Endothelial cell of umbilical vein (primary cell): ENCODE measurements at regions of chr4 and their contacts with region 1.

Region 1: DNA sequence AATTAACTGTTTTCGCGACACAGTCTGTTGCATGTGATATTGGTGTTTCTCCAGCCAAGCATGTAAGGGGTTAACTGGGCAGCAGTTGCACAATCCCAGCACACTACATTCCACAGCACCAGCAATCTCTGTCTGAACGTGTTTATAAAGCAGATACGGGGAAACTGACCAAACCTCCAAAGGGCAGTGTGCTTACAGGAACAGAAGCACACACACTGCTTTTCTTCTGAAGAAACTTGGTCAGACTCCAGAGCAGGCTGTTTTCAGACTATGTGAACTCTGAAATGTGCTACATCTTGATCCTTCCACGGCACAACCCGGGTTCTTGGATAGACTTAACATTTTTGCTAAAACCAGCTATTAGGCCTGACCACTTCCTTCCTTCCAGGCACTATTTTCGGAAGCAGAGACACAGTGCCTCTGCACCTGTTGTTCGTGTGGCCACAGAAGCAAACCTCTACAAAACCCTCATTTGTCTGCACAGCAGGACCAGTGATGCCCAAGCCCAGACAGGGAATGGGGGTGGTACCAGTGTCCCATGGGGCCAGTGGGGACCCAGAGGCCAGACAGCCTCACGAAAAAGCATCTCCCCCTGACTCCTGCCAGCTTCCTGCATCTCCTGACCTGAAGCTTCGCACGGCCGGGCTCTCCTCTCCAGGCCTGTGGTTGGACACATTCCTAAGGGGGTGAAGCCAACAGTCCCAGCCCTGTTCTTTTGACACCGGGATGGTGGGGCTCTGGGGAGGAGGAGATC is 90.1 kb downstream of the IRF2 start:
- DNase-seq: peak; percentile 74
- H3K4me3 ChIP-seq: peak overlapping the region in 2 of 3 experiments; percentile 37 to 71
- H3K27ac ChIP-seq: peak overlapping the region; percentile 71
- H3K4me1 ChIP-seq: peaks cover 52% of the 10 kb centered on the region
- H3K27me3 ChIP-seq: no peaks in the 10 kb centered on the region
- CTCF ChIP-seq: no peak
- POLR2A ChIP-seq: no peak

Region 2: GRCh38 chr4:184232206-184232820 is 151.9 kb before region 1 on chr4:
- CTCF ChIA-PET with region 1: no interaction called
- POLR2A ChIA-PET with region 1: no interaction called
- dilution Hi-C with region 1: no loop called
- intact Hi-C with region 1: no loop called
- DNase-seq: no peak
- H3K4me3 ChIP-seq: no peak overlapping the region
- H3K27ac ChIP-seq: no peak overlapping the region
- H3K4me1 ChIP-seq: no peaks in the 10 kb centered on the region
- H3K27me3 ChIP-seq: peaks cover 3% of the 10 kb centered on the region in 2 experiments
- CTCF ChIP-seq: no peak
- POLR2A ChIP-seq: no peak

Region 3: DNA sequence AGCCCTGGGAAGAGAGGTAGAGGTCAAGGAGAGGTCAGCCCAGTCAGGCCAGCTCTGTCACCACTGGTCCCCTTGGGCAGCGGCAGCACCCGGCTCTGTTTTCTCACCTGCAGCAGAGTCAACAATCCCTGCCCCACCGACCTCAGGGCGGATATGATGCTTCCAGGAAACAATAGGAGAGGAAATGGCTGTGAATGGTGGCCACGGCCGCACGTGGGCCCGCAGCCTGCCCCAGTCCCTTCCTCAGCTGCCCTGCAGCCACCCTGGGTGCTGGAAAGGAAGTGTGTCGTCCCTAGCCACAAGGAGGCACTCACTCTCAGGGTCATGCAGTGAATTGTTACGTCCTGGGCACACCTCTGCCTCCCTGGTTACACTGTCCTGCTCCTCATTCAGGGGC is 74.1 kb before region 1 on chr4:
- CTCF ChIA-PET with region 1: no interaction called
- POLR2A ChIA-PET with region 1: no interaction called
- dilution Hi-C with region 1: no loop called
- intact Hi-C with region 1: loop called (anchors 1 kb)
- DNase-seq: peak; percentile 28
- H3K4me3 ChIP-seq: no peak overlapping the region
- H3K27ac ChIP-seq: peak overlapping the region; percentile 21
- H3K4me1 ChIP-seq: no peaks in the 10 kb centered on the region
- H3K27me3 ChIP-seq: no peaks in the 10 kb centered on the region
- CTCF ChIP-seq: peak; percentile 20 to 22
- POLR2A ChIP-seq: no peak

Region 4: DNA sequence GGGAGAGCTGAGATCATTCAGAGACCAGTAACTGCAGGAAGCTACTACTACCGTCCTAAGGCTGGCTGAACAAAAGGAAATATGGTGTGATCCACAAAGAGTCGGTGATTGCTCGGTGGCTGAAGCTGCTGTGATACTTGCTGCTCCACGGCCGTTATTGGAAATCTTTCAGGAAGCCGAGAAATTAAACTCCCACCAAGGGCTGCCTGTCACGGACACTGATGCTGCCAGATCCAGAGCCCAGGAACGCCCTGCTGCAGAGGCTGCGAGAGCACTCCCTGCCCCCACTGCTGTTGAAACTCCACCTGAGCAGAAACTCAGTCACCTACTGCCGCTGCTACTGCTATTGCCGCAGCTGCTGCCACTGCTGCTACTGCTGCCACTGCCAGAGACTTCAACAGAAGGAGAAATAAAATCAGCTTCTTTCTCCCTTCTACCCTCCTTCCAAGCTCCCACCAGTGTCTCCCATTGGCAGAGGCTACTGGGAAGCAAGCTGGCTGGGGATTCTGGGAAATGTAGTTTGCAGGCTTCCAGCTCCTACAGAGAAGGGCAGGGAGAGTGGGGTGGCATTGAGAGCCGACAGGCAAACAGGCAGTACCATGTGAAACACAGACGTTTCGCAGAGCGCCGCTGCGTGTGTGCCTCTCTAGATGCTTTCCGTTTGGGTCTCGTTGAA is 40.6 kb before region 1 on chr4:
- CTCF ChIA-PET with region 1: interaction called, 4 read pairs
- POLR2A ChIA-PET with region 1: no interaction called
- dilution Hi-C with region 1: no loop called
- intact Hi-C with region 1: loop called (anchors 1 kb)
- DNase-seq: peak; percentile 87
- H3K4me3 ChIP-seq: peak overlapping the region; percentile 80 to 90 (median 83)
- H3K27ac ChIP-seq: peak overlapping the region; percentile 62
- H3K4me1 ChIP-seq: peaks cover 13% of the 10 kb centered on the region
- H3K27me3 ChIP-seq: no peaks in the 10 kb centered on the region
- CTCF ChIP-seq: no peak
- POLR2A ChIP-seq: peak; percentile 78

Region 5: DNA sequence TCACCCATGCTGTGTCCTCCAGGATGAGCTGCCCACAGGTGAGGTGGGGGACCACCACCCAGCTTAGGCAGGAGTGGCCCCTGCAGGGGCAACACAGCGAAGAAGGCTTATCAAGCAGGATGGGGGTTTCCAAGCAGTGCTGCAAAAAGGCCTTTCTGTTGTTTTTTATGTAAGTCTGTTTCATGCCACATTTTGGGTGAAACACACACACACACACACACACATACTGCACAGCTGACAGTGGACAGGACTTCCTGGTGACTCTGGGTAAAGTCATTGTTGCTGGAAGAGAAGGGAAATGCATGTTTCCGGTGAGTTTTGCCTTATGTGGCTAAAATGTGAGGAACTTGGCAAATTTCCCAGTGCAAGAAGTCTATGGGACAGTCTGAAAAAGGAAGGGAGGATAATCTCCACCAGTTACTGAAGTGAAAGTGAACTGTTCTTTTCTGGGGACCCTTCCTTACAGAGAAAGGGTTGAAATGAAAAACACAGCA is 29.1 kb before region 1 on chr4:
- CTCF ChIA-PET with region 1: interaction called, 3 read pairs
- POLR2A ChIA-PET with region 1: interaction called, 3 read pairs
- dilution Hi-C with region 1: no loop called
- intact Hi-C with region 1: loop called (anchors 1 kb)
- DNase-seq: peak; percentile 98
- H3K4me3 ChIP-seq: no peak overlapping the region
- H3K27ac ChIP-seq: peak overlapping the region; percentile 72
- H3K4me1 ChIP-seq: peaks cover 13% of the 10 kb centered on the region
- H3K27me3 ChIP-seq: no peaks in the 10 kb centered on the region
- CTCF ChIP-seq: no peak
- POLR2A ChIP-seq: peak; percentile 73

Region 6: GRCh38 chr4:184408021-184408710 is 23.9 kb after region 1 on chr4:
- CTCF ChIA-PET with region 1: no interaction called
- POLR2A ChIA-PET with region 1: no interaction called
- dilution Hi-C with region 1: no loop called
- intact Hi-C with region 1: loop called (anchors 2 kb)
- DNase-seq: peak; percentile 21
- H3K4me3 ChIP-seq: no peak overlapping the region
- H3K27ac ChIP-seq: peak overlapping the region; percentile 6
- H3K4me1 ChIP-seq: peaks cover 25% of the 10 kb centered on the region
- H3K27me3 ChIP-seq: no peaks in the 10 kb centered on the region
- CTCF ChIP-seq: no peak
- POLR2A ChIP-seq: no peak

Region 7: DNA sequence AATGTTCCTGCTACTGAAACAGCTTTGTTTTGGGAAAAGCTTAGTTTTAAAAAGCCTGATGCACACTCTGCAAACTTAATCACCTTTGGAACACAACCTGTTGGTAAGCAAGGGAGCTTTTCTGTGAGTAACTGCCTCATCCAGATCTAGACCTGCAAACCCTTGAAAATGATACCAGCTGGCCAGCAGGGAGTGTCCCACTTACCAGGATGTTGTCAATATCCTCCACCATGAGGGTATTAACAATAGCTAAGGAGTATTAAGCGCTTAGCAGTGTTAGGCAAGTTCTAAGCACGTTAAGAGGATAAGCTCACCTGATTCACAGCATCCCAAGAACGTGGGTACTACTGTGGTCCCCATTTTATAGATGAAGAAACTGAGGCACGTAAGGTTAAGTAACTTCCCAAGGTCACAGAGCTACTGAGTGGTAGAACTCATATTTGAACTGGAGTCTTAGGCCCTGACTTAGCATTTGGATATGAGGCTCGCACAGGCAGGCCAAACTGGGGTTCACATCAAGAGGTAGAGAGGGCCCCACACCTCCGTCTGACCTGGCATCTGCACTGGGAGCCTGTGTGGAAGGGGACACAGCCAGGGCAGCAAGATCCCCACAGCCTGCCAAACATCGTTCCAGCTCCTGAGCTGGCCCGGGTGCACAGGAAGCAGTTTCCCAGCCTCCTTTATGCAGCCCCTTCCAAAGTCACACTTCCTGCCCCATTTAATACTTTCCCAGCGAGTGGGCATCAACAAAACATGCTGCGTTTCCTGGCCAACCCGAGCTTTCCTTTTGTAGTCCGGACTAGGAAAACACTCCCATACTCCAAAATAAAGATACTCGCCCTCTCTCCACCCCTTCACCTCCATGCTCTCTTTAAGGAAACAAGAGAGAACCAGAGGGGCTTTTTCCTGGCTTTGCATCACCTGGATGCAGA is 57.5 kb after region 1 on chr4:
- CTCF ChIA-PET with region 1: no interaction called
- POLR2A ChIA-PET with region 1: no interaction called
- dilution Hi-C with region 1: no loop called
- intact Hi-C with region 1: loop called (anchors 2 kb)
- DNase-seq: peak; percentile 74
- H3K4me3 ChIP-seq: peak overlapping the region in 1 of 3 experiments; percentile 19
- H3K27ac ChIP-seq: peak overlapping the region; percentile 44
- H3K4me1 ChIP-seq: peaks cover 15% of the 10 kb centered on the region
- H3K27me3 ChIP-seq: no peaks in the 10 kb centered on the region
- CTCF ChIP-seq: no peak
- POLR2A ChIP-seq: no peak

Region 8: DNA sequence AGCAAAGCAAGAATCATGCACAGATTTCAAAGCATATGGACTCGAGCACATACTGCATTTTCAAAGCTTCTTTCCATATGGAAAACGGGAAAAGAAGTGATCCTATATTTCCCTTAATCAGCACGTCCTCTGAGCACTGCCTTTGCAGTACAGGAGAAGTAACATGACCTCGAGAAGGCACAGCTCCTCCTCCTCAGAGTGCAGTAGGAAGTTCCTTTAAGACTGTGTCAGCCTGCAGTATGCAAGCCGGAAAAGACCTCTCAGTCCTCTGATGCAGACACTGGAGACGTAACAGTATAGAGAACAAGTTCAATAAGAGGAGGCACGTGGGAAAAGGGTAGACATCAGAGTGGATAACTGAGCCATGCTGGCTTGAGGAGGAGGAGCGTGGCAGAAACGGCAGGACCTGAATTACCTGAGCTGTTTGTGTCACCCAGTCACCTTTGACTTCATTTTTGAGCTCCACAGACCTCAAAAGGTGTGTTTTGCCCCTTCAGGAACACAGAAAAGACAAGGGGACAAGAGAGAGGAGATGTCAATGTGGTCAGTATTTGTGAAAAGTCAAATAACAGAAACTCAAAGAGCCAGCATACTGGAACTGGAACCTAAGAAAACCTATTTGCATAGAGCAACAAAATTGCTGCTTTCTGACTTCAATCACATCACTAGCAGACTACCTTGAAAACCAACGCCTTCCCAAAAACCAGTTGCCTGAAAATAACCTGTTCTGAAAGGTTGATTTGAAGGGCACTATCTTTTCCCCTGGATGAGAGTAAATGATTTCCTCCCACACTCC is 69.3 kb after region 1 on chr4:
- CTCF ChIA-PET with region 1: no interaction called
- POLR2A ChIA-PET with region 1: no interaction called
- dilution Hi-C with region 1: no loop called
- intact Hi-C with region 1: no loop called
- DNase-seq: peak; percentile 80
- H3K4me3 ChIP-seq: no peak overlapping the region
- H3K27ac ChIP-seq: peak overlapping the region; percentile 54
- H3K4me1 ChIP-seq: peaks cover 42% of the 10 kb centered on the region
- H3K27me3 ChIP-seq: no peaks in the 10 kb centered on the region
- CTCF ChIP-seq: no peak
- POLR2A ChIP-seq: no peak

Region 9: DNA sequence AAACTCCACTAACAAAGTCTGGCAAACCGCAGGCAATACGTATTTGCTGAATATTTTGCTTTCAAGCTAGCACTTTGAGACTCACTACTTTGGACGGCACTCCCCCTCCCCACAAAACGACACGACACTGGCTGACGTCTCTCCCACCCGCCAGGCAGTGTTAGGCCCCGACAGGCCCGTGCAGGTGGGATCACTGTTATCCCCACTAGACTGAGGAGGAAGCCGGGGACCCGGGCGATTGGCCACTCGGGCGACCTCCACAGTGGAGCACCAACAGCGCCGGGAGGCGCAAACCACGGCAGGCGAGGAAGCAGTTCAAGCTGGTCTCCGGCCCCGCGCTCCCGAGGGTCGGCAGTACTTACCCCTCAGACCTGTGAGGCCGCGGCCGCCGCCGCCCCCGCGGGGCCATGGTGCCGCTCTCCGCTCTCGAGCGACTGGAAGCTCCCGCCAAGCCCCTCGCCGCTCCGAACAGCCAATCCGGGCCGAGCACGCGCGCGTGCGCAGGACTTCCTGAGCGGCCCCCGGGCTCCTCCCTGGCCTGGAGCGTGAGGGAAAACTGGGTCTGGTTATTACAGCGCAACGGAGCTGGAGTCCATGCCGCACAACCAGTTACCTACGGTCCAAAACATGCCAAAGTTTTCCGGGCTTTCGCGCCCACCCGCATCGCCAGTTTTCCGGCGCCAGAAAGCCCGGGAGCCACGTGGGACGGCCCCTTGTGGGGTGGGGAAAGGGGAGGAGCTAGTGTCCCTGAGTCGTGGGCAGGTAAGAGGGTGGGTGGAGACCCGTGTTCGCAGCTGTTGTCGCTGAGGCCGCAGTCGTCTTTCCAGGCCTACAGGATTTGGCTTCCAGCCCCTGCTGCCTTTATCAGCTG is 349.7 kb after region 1 on chr4 and contains the start of gene CENPU:
- CTCF ChIA-PET with region 1: interaction called, 3 read pairs
- POLR2A ChIA-PET with region 1: no interaction called
- dilution Hi-C with region 1: no loop called
- intact Hi-C with region 1: loop called (anchors 5 kb)
- DNase-seq: peak; percentile 99
- H3K4me3 ChIP-seq: peak within 1 kb of the TSS; percentile 75 to 91 (median 88)
- H3K27ac ChIP-seq: peak within 1 kb of the TSS; percentile 72
- H3K4me1 ChIP-seq: peaks cover 16% of the 10 kb centered on the region
- H3K27me3 ChIP-seq: no peaks in the 10 kb centered on the region
- CTCF ChIP-seq: no peak
- POLR2A ChIP-seq: peak; percentile 68
- total RNA-seq, gene CENPU: 35.6 and 37.9 TPM in 2 replicates